ENCODE measurements at regions of chr3 and their contacts with region 1.

Region 1: GRCh38 chr3:170021083-170021482 is 16.7 kb upstream of the GPR160 start:
- DNase-seq: no peak
- ATAC-seq: peak; percentile 52; the same call in 2 of the 3 replicates
- H3K4me3 ChIP-seq: no peak overlapping the region
- H3K27ac ChIP-seq: no peak overlapping the region
- H3K4me1 ChIP-seq: no peaks in the 10 kb centered on the region
- H3K27me3 ChIP-seq: no peaks in the 10 kb centered on the region
- CTCF ChIP-seq: peak in 1 of 3 experiments; percentile 19; a peak in 2 of 6 replicates
- EP300 ChIP-seq: no peak
- POLR2A ChIP-seq: no peak
- RAD21 ChIP-seq: peak; percentile 65

Region 2: DNA sequence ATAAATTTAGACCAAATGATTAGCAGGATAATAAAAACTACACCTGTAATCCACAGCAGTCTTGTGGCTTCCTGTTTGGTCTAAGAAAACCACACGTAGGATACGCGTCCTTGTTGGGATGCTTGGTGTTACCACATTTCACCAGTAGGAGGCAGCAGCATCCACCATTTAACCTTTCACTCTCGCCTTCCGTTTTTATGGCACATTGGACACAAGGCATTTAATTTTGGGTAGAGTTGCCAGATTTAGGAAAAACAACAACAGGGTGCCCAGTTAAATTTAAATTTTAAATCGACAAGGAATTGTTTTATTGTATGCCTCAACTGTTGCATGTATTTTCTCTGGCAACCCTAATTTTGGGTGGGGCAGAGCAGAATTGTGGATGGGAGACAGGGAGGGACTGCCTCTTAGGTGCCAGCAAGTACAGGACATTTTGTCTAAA is 157.6 kb before region 1 on chr3:
- CTCF ChIA-PET with region 1: interaction called, 18 read pairs
- POLR2A ChIA-PET with region 1: no interaction called
- RAD21 ChIA-PET with region 1: interaction called, 3 read pairs
- SMC1A ChIA-PET with region 1: interaction called, 8 read pairs
- in situ Hi-C with region 1: no loop called
- intact Hi-C with region 1: no loop called
- DNase-seq: peak; percentile 61
- ATAC-seq: peak; percentile 81
- H3K4me3 ChIP-seq: no peak overlapping the region
- H3K27ac ChIP-seq: no peak overlapping the region
- H3K4me1 ChIP-seq: peaks cover 16% of the 10 kb centered on the region
- H3K27me3 ChIP-seq: no peaks in the 10 kb centered on the region; a peak in 1 of 4 replicates
- CTCF ChIP-seq: peak; percentile 93 to 96 (median 93); a peak in 5 of 6 replicates
- EP300 ChIP-seq: no peak
- POLR2A ChIP-seq: no peak
- RAD21 ChIP-seq: peak; percentile 99

Region 3: GRCh38 chr3:170010498-170010897 is 10.6 kb before region 1 on chr3:
- CTCF ChIA-PET with region 1: interaction called, 12 read pairs
- POLR2A ChIA-PET with region 1: no interaction called
- RAD21 ChIA-PET with region 1: no interaction called
- SMC1A ChIA-PET with region 1: interaction called, 7 read pairs
- in situ Hi-C with region 1: no loop called
- intact Hi-C with region 1: no loop called
- DNase-seq: no peak
- ATAC-seq: peak; percentile 28; the same call in 1 of the 3 replicates
- H3K4me3 ChIP-seq: 0 out of 2 replicates have a peak overlapping the region, but pooled peaks have one; percentile 29
- H3K27ac ChIP-seq: no peak overlapping the region
- H3K4me1 ChIP-seq: peaks cover 15% of the 10 kb centered on the region
- H3K27me3 ChIP-seq: no peaks in the 10 kb centered on the region
- CTCF ChIP-seq: no peak
- EP300 ChIP-seq: no peak
- POLR2A ChIP-seq: no peak
- RAD21 ChIP-seq: no peak